MCF 10A (cell line): ENCODE measurements at regions of chr6 and their contacts with region 1.

Region 1: GRCh38 chr6:153231048-153231646 is 100.1 kb upstream of the RGS17 start:
- DNase-seq: peak; percentile 74
- H3K4me3 Mint-ChIP-seq: no peak overlapping the region
- H3K27ac Mint-ChIP-seq: no peak overlapping the region
- H3K4me1 Mint-ChIP-seq: peaks cover 4% of the 10 kb centered on the region
- H3K27me3 Mint-ChIP-seq: no peaks in the 10 kb centered on the region
- CTCF ChIP-seq: peak; percentile 92

Region 2: DNA sequence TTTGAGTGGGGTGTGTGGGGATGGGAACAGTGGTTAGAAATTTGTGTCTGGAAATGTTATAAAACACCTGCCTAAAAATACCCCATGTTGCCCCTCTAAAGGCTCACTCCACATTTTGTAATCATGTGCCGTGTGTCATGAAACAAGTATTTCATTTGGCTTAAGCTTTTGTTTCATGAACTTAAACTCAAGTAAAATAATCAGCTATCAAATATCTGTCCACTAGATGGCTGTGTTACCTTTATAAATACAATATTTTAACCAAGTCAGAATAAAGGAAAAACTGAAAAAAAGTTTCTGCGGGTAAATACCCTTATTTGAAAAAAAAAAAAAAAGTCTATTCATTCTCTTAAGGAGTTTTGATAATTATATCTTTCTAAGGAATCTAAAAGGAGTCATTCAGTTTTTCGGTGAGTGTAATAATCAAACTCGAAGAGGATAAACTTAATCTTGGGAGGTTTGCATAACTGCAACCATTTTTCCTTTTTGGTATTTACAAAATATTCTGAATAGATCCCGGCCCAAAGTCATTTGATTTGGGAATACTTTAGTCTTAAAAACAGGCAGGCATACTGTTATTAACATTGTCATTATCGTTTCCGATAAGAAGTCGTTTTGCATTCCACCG is 198.8 kb before region 1 on chr6:
- CTCF ChIA-PET with region 1: no interaction called
- POLR2A ChIA-PET with region 1: no interaction called
- intact Hi-C with region 1: loop called (anchors 2 kb)
- DNase-seq: peak; percentile 46
- H3K4me3 Mint-ChIP-seq: no peak overlapping the region
- H3K27ac Mint-ChIP-seq: no peak overlapping the region
- H3K4me1 Mint-ChIP-seq: peaks cover 20% of the 10 kb centered on the region
- H3K27me3 Mint-ChIP-seq: no peaks in the 10 kb centered on the region
- CTCF ChIP-seq: peak; percentile 43

Region 3: DNA sequence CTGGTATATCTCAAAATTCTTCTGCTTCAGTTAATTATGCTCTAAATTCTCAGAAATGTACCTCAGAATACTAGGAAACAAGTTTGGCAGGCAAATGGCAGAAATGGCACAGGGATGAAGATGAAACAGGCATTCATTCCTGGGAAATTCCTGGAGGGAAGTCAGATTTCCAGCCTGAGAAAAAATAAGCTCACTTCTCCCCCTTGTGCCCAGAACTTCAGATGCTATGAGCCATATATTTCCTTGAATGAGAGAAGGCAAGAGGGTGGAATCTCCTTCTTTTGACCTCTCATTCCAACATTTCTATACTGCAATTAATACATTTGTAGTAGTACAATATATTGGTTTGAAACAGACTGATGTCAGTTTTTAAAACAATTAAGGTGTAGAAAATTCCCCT is 122.8 kb before region 1 on chr6:
- CTCF ChIA-PET with region 1: no interaction called
- POLR2A ChIA-PET with region 1: no interaction called
- intact Hi-C with region 1: no loop called
- DNase-seq: peak; percentile 57
- H3K4me3 Mint-ChIP-seq: no peak overlapping the region
- H3K27ac Mint-ChIP-seq: no peak overlapping the region
- H3K4me1 Mint-ChIP-seq: peaks cover 16% of the 10 kb centered on the region
- H3K27me3 Mint-ChIP-seq: no peaks in the 10 kb centered on the region
- CTCF ChIP-seq: peak; percentile 30

Region 4: DNA sequence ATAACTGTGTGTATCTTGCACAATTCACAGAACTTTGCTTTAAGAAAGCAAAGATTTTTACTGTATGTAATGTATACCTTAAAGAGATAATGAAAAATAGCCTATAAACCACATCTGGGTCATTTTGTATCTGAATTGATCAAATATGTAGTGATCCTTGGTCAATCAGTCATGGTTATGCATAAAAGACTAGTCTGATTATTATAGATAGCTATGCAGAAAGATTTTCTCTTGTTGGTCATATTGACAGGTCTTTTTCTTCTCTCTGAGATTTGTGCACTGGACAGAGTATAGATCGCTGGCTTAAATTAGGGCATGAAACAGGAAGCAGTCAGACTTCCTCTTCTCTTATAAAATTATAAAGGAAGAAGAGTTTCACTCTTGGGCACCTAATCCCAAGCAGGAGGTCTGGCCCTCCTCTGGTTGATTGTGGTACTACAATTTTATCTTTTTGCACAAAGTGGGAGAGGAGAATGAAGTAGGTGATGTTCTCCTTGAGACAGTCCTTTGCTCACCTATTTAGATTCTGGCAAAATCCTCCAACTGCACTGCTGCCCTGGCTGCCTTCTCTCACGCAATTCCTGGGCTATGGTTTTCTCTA is 280.8 kb after region 1 on chr6:
- CTCF ChIA-PET with region 1: interaction called, 23 read pairs
- POLR2A ChIA-PET with region 1: interaction called, 4 read pairs
- intact Hi-C with region 1: loop called (anchors 1 kb)
- DNase-seq: peak; percentile 67
- H3K4me3 Mint-ChIP-seq: no peak overlapping the region
- H3K27ac Mint-ChIP-seq: peak overlapping the region; percentile 35
- H3K4me1 Mint-ChIP-seq: no peaks in the 10 kb centered on the region
- H3K27me3 Mint-ChIP-seq: no peaks in the 10 kb centered on the region
- CTCF ChIP-seq: peak; percentile 62

Region 5: GRCh38 chr6:153591159-153591558 is 360.0 kb after region 1 on chr6:
- CTCF ChIA-PET with region 1: no interaction called
- POLR2A ChIA-PET with region 1: no interaction called
- intact Hi-C with region 1: no loop called
- DNase-seq: no peak
- H3K4me3 Mint-ChIP-seq: no peak overlapping the region
- H3K27ac Mint-ChIP-seq: no peak overlapping the region
- H3K4me1 Mint-ChIP-seq: peaks cover 33% of the 10 kb centered on the region
- H3K27me3 Mint-ChIP-seq: no peaks in the 10 kb centered on the region
- CTCF ChIP-seq: no peak

Region 6: DNA sequence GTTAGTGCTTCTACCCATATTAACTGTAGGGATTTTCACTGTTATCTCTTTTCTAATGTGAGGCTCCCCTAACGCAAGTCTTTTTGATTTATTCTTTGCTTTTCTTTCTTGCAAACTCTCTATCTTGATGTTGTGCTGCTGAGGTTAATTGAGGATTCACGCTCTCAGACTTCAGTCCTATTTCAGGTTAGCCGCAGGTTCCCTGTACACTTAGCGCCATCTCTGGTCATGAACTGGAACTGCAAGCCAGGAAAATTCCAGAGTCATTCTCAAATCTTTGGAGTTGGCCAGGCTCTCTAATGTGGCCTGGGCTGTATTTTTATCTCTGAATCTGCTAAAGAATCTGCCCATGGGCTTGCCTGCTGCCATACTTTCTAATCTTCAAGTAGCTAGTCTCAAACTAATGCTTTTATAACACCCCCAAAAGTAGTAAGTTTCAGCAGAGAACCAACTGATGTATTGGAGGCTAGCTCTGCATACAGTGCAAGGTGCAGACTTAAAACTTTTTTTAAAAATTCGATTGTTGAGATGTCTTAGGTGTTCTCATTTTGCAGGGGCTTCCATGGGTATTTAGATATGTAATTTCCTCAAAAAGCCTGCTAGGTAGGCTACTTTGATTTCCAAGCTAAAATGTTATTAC is 716.8 kb after region 1 on chr6:
- CTCF ChIA-PET with region 1: interaction called, 21 read pairs
- POLR2A ChIA-PET with region 1: no interaction called
- intact Hi-C with region 1: loop called (anchors 1 kb)
- DNase-seq: peak; percentile 52
- H3K4me3 Mint-ChIP-seq: no peak overlapping the region
- H3K27ac Mint-ChIP-seq: no peak overlapping the region
- H3K4me1 Mint-ChIP-seq: peaks cover 6% of the 10 kb centered on the region
- H3K27me3 Mint-ChIP-seq: no peaks in the 10 kb centered on the region
- CTCF ChIP-seq: peak; percentile 84

Region 7: GRCh38 chr6:154156135-154156896 is 925.2 kb after region 1 on chr6:
- CTCF ChIA-PET with region 1: no interaction called
- POLR2A ChIA-PET with region 1: no interaction called
- intact Hi-C with region 1: loop called (anchors 10 kb)
- DNase-seq: peak; percentile 57
- H3K4me3 Mint-ChIP-seq: no peak overlapping the region
- H3K27ac Mint-ChIP-seq: no peak overlapping the region
- H3K4me1 Mint-ChIP-seq: peaks cover 4% of the 10 kb centered on the region
- H3K27me3 Mint-ChIP-seq: no peaks in the 10 kb centered on the region
- CTCF ChIP-seq: peak; percentile 51